Activated CD4-positive, alpha-beta T cell treated with anti-CD3 and anti-CD28 coated beads, Interleukin-2, amount 10 ng/mL, durations not matched to agents 24 days and 14 days (primary cell): ENCODE measurements at regions of chr10 and their contacts with region 1.

Region 1: GRCh38 chr10:59880971-59881510 is 25.3 kb downstream of the CCDC6 start:
- DNase-seq: peak; percentile 87
- H3K4me3 Mint-ChIP-seq: peak overlapping the region; percentile 69
- H3K27ac Mint-ChIP-seq: peak overlapping the region; percentile 92
- H3K4me1 Mint-ChIP-seq: peaks cover 74% of the 10 kb centered on the region
- H3K27me3 Mint-ChIP-seq: no peaks in the 10 kb centered on the region

Region 2: DNA sequence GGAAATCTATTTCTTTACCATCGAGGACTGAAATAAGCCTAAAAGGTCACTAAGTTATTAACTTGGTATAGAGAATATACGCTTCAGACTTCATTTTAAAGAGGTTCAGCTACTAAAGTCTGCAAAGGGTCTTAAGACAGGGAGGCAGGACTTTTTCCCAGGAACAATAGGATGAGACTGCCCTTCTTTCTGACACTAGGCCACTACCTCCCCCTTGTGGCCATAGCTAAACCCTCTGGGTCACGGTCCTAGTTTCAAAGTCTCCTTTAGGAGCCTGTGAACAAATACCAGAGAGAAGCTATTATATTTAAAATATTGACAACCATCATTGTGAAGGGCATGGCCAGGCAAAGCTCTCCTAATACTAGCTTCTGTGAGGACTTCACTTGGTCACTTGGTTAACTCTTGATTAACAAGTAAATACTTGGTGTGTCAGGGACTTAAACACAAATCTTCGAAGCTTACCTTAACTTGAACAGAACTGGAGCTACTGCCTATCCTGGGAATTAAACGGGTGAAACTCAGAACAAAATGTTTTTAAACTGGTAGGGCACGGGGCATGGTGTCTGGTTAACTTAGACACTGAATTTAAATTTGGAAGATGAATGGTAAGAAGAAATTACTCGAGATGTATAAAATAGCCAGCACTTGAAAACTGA is 50.3 kb before region 1 on chr10:
- intact Hi-C with region 1: loop called (anchors 2 kb)
- DNase-seq: peak; percentile 75
- H3K4me3 Mint-ChIP-seq: no peak overlapping the region
- H3K27ac Mint-ChIP-seq: no peak overlapping the region
- H3K4me1 Mint-ChIP-seq: peaks cover 39% of the 10 kb centered on the region
- H3K27me3 Mint-ChIP-seq: no peaks in the 10 kb centered on the region

Region 3: DNA sequence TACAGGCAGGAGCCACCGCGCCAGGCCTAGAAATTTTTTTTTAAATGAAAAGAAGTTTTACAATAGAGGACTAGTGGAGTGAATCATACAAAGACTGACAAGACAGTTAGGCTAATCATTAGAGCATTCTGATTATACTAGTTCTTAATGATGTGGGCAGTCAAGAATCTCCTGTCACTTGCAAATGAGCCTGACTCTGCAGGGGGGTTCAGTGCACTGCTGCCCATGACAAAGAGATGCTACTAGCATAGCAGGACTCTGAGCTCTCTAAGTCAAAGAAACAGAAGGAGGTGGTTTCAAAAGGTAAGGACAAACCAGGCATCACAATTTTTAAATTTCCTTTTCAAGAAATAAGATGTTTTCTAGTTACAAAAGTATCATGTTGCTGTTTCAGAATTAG is 33.7 kb before region 1 on chr10:
- intact Hi-C with region 1: no loop called
- DNase-seq: no peak
- H3K4me3 Mint-ChIP-seq: no peak overlapping the region
- H3K27ac Mint-ChIP-seq: peak overlapping the region; percentile 53
- H3K4me1 Mint-ChIP-seq: peaks cover 15% of the 10 kb centered on the region
- H3K27me3 Mint-ChIP-seq: no peaks in the 10 kb centered on the region

Region 4: GRCh38 chr10:59865101-59865500 is 15.9 kb before region 1 on chr10:
- intact Hi-C with region 1: loop called (anchors 2 kb)
- DNase-seq: peak; percentile 72
- H3K4me3 Mint-ChIP-seq: no peak overlapping the region
- H3K27ac Mint-ChIP-seq: peak overlapping the region; percentile 27
- H3K4me1 Mint-ChIP-seq: peaks cover 40% of the 10 kb centered on the region
- H3K27me3 Mint-ChIP-seq: no peaks in the 10 kb centered on the region

Region 5: GRCh38 chr10:60032723-60033122 is 151.7 kb after region 1 on chr10:
- intact Hi-C with region 1: loop called (anchors 5 kb)
- DNase-seq: peak; percentile 79
- H3K4me3 Mint-ChIP-seq: no peak overlapping the region
- H3K27ac Mint-ChIP-seq: no peak overlapping the region
- H3K4me1 Mint-ChIP-seq: peaks cover 6% of the 10 kb centered on the region
- H3K27me3 Mint-ChIP-seq: no peaks in the 10 kb centered on the region

Region 6: GRCh38 chr10:60733189-60733822 is 852.3 kb after region 1 on chr10:
- intact Hi-C with region 1: loop called (anchors 5 kb)
- DNase-seq: peak; percentile 88
- H3K4me3 Mint-ChIP-seq: peak overlapping the region; percentile 81
- H3K27ac Mint-ChIP-seq: peak overlapping the region; percentile 49
- H3K4me1 Mint-ChIP-seq: peaks cover 39% of the 10 kb centered on the region
- H3K27me3 Mint-ChIP-seq: peaks cover 2% of the 10 kb centered on the region